HepG2 (cell line): ENCODE measurements at regions of chr2 and their contacts with region 1.

Region 1: DNA sequence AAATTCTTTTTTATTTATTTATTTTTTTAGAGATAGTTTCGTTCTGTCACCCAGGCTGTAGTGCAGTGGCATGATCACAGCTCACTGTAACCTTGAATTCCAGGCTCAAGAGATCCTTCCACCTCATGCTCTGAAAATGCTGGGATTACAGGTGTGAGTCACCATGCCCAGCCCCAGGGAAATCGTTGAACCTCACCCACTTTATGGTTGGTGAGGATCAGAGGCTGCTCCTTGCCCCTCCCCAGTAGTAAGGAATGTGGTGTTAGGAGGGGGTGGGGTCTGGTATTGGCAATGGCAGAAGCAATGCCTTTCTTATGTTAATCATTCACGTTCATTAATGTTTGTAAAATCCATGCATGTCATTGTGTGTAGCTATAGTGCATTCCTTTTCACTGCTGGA is 161.9 kb downstream of the SUCLG1 start:
- DNase-seq: peak; percentile 88
- ATAC-seq: peak; percentile 33
- H3K4me3 ChIP-seq: no peak overlapping the region
- H3K27ac ChIP-seq: peak overlapping the region; percentile 43
- H3K4me1 ChIP-seq: peaks cover 99% of the 10 kb centered on the region
- H3K27me3 ChIP-seq: no peaks in the 10 kb centered on the region
- CTCF ChIP-seq: no peak
- EP300 ChIP-seq: peak; percentile 57 to 64; a peak in 2 of 4 replicates
- POLR2A ChIP-seq: no peak
- RAD21 ChIP-seq: peak; percentile 45; the same call in 1 of the 2 replicates

Region 2: DNA sequence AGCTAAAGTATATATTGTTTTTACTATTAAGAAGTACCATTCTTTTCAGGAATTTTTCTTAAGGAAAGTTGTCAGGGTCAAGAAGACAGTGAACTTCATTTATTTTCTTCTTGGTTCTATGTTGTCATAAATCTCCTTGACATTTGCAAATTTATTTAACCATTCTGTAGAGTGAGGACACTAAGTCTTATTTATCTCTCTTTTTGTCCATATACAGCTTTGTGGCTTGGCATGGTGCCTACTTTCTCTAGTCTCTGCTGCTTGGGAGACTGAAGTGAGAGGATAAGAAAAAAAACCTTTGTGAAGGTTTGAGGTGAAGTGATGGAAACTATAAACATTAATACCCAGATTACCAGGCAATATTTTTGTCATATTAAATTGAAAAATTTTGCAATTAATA is 1227.4 kb before region 1 on chr2:
- CTCF ChIA-PET with region 1: no interaction called
- POLR2A ChIA-PET with region 1: interaction called, 11 read pairs
- in situ Hi-C with region 1: no loop called
- intact Hi-C with region 1: no loop called
- DNase-seq: no peak
- ATAC-seq: no peak
- H3K4me3 ChIP-seq: no peak overlapping the region
- H3K27ac ChIP-seq: no peak overlapping the region
- H3K4me1 ChIP-seq: peaks cover 58% of the 10 kb centered on the region
- H3K27me3 ChIP-seq: no peaks in the 10 kb centered on the region
- CTCF ChIP-seq: no peak
- EP300 ChIP-seq: no peak
- POLR2A ChIP-seq: no peak
- RAD21 ChIP-seq: no peak

Region 3: DNA sequence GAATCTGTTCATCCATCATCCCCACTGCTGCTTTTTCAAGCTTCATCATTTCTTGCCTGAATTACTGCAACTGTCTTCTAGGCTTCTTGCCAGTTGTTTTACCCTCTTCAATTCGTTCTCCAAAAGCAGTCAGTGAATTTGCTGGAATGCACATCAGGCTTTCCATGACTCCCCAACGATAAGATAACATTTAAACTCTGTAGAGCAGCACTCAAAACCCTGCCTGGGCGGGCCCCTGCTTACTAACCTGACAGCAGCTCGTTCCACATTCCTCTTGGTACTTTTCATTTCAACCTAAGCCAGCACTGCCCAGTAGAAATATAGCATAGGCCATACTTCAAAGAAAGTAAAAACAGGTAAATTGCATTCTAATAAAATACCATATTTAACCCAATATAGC is 181.0 kb before region 1 on chr2:
- CTCF ChIA-PET with region 1: no interaction called
- POLR2A ChIA-PET with region 1: no interaction called
- in situ Hi-C with region 1: no loop called
- intact Hi-C with region 1: no loop called
- DNase-seq: no peak
- ATAC-seq: no peak
- H3K4me3 ChIP-seq: no peak overlapping the region
- H3K27ac ChIP-seq: no peak overlapping the region
- H3K4me1 ChIP-seq: no peaks in the 10 kb centered on the region
- H3K27me3 ChIP-seq: no peaks in the 10 kb centered on the region
- CTCF ChIP-seq: no peak
- EP300 ChIP-seq: no peak
- POLR2A ChIP-seq: no peak
- RAD21 ChIP-seq: no peak

Region 4: GRCh38 chr2:84280873-84281272 is 16.3 kb before region 1 on chr2:
- CTCF ChIA-PET with region 1: no interaction called
- POLR2A ChIA-PET with region 1: interaction called, 10 read pairs
- in situ Hi-C with region 1: no loop called
- intact Hi-C with region 1: no loop called
- DNase-seq: no peak
- ATAC-seq: no peak
- H3K4me3 ChIP-seq: no peak overlapping the region
- H3K27ac ChIP-seq: no peak overlapping the region
- H3K4me1 ChIP-seq: peaks cover 39% of the 10 kb centered on the region
- H3K27me3 ChIP-seq: no peaks in the 10 kb centered on the region
- CTCF ChIP-seq: no peak
- EP300 ChIP-seq: no peak
- POLR2A ChIP-seq: no peak
- RAD21 ChIP-seq: no peak

Region 5: GRCh38 chr2:84459018-84459943 is 162.1 kb after region 1 on chr2 and contains the start of gene SUCLG1:
- CTCF ChIA-PET with region 1: no interaction called
- POLR2A ChIA-PET with region 1: interaction called, 5 read pairs
- in situ Hi-C with region 1: no loop called
- intact Hi-C with region 1: loop called (anchors 2 kb)
- DNase-seq: peak; percentile 79
- ATAC-seq: peak; percentile 95
- H3K4me3 ChIP-seq: peak within 1 kb of the TSS; percentile 86 to 92 (median 90)
- H3K27ac ChIP-seq: peak within 1 kb of the TSS; percentile 81
- H3K4me1 ChIP-seq: peaks cover 63% of the 10 kb centered on the region
- H3K27me3 ChIP-seq: no peaks in the 10 kb centered on the region; a peak in 1 of 5 replicates
- CTCF ChIP-seq: no peak
- EP300 ChIP-seq: no peak
- POLR2A ChIP-seq: peak; percentile 64 to 75
- RAD21 ChIP-seq: peak; percentile 43; the same call in 1 of the 2 replicates
- total RNA-seq, gene SUCLG1: 121 and 177 TPM in 2 replicates